CD4-positive, alpha-beta memory T cell (primary cell): ENCODE measurements at regions of chr1 and their contacts with region 1.

Region 1: DNA sequence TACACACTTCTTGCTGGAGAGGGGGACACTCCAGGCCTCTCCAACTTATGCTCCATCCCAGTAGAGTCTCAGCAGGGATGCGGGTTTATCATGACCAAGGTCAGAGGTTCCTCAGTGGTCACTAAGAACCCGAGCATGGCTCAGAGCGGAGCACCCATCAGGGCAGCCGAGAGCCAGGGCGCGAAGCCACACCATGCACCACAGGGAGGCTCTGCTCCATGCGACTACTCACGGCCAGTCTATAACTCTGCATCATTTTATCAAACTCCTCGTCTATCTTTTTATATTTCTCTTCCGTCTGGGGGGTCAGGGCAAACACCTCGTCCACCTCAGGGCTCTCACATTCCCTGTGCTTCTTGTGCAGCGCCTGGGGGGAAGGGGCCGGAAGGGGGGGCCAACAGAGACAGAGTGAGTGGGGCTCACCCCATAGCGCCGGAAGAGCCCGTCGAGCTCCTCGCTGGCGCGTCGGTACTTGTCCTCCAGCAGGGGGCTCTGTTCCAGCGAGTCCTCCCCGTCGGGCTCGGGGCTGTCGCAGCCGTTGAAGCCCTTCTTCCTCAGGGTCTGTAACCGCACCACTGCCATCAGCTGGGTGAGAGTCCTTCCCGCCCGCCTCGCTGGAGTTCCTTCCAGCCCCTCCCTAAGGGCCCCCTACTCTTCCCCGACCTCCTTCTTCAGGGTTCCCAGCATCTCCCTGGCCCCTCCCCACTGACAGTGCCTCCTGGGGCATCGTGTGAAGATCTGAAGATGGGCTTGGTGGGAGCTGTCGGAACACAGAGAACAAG is 20.0 kb downstream of the MEF2D start:
- DNase-seq: peak; percentile 77 to 81 (median 80)
- H3K4me3 ChIP-seq: no peak overlapping the region
- H3K4me3 Mint-ChIP-seq: peak overlapping the region in 6 of 8 donors; percentile 33 to 58 (median 46)
- H3K27ac ChIP-seq: peak overlapping the region; percentile 42
- H3K27ac Mint-ChIP-seq: peak overlapping the region; percentile 75 to 97 (median 92)
- H3K4me1 ChIP-seq: peaks cover 47% of the 10 kb centered on the region
- H3K4me1 Mint-ChIP-seq: peaks cover 31 to 53% (median 44%) of the 10 kb centered on the region in 4 donors
- H3K27me3 ChIP-seq: no peaks in the 10 kb centered on the region
- H3K27me3 Mint-ChIP-seq: no peaks in the 10 kb centered on the region

Region 2: DNA sequence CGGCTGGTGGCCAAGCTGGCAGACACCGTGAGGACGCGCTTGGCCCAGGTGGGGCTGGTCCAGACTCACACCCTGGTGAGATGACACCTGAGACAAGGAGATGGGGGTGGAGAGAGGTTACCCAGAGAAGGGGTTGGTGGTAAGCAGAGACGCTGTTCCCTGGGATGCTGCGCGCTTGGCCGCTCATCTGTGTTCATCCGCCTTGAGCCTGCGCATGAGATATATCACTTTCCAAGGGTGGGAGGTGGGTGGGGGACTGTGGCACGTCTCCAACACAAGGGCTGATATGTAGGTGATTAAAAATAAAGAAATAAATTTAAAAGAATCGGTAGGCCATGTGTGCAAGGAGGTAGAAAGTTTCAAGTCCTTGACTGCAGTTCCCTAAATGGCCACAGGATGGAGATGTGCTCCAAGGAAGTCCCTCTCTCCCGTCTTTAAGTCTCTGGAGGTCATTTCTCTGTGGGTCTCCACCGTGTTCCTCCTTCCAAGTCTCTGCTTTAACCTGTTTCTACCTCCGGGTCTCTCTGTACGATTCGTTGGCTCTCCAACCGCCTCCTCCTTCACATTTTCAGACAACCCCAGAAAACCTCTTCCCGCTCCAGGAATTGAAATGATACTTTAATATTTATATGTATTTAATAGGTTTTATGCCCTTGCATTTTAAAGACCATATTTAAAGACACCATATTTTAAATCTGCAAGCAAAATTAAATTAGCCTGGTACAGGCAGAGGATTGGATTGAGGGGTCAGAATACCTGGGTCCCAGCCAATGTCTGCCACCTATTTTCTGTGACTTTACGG is 103.4 kb after region 1 on chr1:
- CTCF ChIA-PET with region 1: interaction called, 10 read pairs
- POLR2A ChIA-PET with region 1: no interaction called
- intact Hi-C with region 1: loop called (anchors 1 kb)
- DNase-seq: peak; percentile 65 to 75 (median 71)
- H3K4me3 ChIP-seq: no peak overlapping the region
- H3K4me3 Mint-ChIP-seq: no peak overlapping the region
- H3K27ac ChIP-seq: no peak overlapping the region
- H3K27ac Mint-ChIP-seq: no peak overlapping the region
- H3K4me1 ChIP-seq: no peaks in the 10 kb centered on the region
- H3K4me1 Mint-ChIP-seq: peaks cover 0 to 2% (median under 1%) of the 10 kb centered on the region in 4 donors
- H3K27me3 ChIP-seq: no peaks in the 10 kb centered on the region
- H3K27me3 Mint-ChIP-seq: peaks cover 0 to 2% of the 10 kb centered on the region in 2 donors

Region 3: DNA sequence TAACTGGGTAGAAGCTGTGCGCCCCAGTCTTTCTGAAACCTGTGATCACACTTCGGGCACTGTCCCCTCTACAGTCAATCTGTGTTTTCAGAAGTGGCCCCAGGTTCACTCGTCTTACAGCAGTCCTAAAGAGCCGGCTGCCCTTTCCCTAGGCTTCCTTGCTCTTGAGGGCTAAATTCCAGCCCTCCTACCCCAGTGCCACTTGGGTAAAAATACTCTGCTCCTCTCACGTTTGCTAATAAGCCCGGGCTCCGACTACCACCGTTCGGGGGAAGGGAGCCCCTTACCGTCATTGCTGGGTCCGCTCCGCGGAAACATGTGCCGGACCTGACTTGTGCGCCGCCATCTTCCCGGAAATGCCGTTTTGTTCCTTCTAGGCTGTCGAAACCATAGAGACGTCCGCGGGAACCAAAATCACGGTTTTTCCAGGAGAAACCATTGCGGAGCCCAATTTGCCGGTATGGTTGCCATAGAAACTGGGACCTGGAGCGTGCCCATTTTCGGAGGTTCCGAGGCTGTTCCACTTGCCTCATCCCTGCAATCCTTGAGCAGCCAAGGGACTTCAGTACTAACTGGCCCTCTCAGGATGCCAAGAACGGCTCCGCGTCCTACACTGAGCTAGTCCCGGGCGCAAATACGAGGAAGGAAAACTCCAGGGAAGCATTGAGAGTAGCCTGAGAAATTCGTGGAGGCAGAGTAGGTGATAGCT is 120.7 kb after region 1 on chr1 and contains the start of gene GPATCH4:
- CTCF ChIA-PET with region 1: interaction called, 21 read pairs
- POLR2A ChIA-PET with region 1: interaction called, 7 read pairs
- intact Hi-C with region 1: no loop called
- DNase-seq: peak; percentile 75 to 82 (median 76)
- H3K4me3 ChIP-seq: peak within 1 kb of the TSS; percentile 82 to 83
- H3K4me3 Mint-ChIP-seq: peak within 1 kb of the TSS; percentile 90 to 100 (median 99)
- H3K27ac ChIP-seq: peak within 1 kb of the TSS; percentile 83
- H3K27ac Mint-ChIP-seq: peak within 1 kb of the TSS; percentile 83 to 100 (median 98)
- H3K4me1 ChIP-seq: peaks cover 30% of the 10 kb centered on the region
- H3K4me1 Mint-ChIP-seq: peaks cover 13 to 37% (median 26%) of the 10 kb centered on the region in 4 donors
- H3K27me3 ChIP-seq: no peaks in the 10 kb centered on the region
- H3K27me3 Mint-ChIP-seq: no peaks in the 10 kb centered on the region
- total RNA-seq, gene GPATCH4: 26.9 to 30.7 TPM

Region 4: GRCh38 chr1:156608036-156608674 is 127.6 kb after region 1 on chr1:
- CTCF ChIA-PET with region 1: interaction called, 18 read pairs
- POLR2A ChIA-PET with region 1: interaction called, 6 read pairs
- intact Hi-C with region 1: loop called (anchors 1 kb)
- DNase-seq: peak; percentile 68 to 75 (median 71)
- H3K4me3 ChIP-seq: no peak overlapping the region
- H3K4me3 Mint-ChIP-seq: no peak overlapping the region
- H3K27ac ChIP-seq: no peak overlapping the region
- H3K27ac Mint-ChIP-seq: peak overlapping the region in 2 of 7 donors; percentile 5 to 46
- H3K4me1 ChIP-seq: peaks cover under 1% of the 10 kb centered on the region
- H3K4me1 Mint-ChIP-seq: peaks cover 2 to 9% (median 7%) of the 10 kb centered on the region in 4 donors
- H3K27me3 ChIP-seq: no peaks in the 10 kb centered on the region
- H3K27me3 Mint-ChIP-seq: peaks cover 7% of the 10 kb centered on the region in 2 donors